ENCODE measurements at regions of chr7 and their contacts with region 1.

Region 1: DNA sequence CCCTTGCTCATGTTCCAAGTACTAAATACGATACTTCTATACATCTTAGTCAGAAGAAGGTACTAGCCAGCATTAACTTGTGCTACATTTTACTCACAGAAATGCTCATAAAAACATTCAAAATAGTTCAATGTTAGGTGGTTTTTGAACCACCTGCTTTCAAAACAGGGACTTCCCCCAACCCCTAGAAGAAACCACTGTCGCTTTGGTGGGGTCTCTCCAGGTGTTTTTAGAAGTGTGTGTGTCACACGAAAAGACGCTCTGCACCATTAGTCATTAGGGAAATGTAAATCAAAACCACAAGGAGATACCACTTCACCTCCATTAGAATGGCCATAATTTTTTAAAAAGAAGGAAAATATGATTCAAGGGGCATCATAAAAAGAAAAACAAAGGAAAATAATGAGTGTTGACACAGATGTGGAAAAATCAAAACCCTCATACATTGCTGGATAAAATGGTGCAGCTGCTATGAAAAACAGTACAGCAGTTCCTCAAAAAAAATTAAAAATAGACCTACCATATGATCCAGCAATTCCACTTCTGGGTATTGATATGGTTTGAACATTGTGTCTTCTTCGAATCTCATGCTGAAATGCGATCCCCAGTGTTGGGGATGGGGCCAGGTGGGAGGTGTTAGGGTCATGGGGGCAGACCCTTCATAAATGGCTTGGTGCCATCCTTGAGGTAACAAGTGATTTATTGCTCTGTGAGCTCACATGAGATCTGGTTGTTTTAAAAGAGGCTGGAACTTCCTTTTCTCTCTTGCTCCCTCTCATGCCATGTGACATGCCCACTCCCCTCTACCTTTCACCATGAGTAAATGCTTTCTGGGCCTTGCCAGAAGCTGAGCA is 74.2 kb downstream of the MALSU1 start:
- DNase-seq: peak; percentile 85
- ATAC-seq: peak; percentile 72
- H3K4me3 ChIP-seq: peak overlapping the region in 2 of 5 experiments; percentile 1 to 38
- H3K4me3 Mint-ChIP-seq: peak overlapping the region; percentile 74
- H3K27ac ChIP-seq: peak overlapping the region; percentile 65 to 77
- H3K27ac Mint-ChIP-seq: peak overlapping the region; percentile 89
- H3K4me1 ChIP-seq: peaks cover 39 to 40% of the 10 kb centered on the region in 2 donors
- H3K4me1 Mint-ChIP-seq: peaks cover 59% of the 10 kb centered on the region
- H3K27me3 ChIP-seq: no peaks in the 10 kb centered on the region
- H3K27me3 Mint-ChIP-seq: no peaks in the 10 kb centered on the region
- CTCF ChIP-seq: no peak

Region 2: GRCh38 chr7:22980422-22980821 is 393.0 kb before region 1 on chr7:
- CTCF ChIA-PET with region 1: no interaction called
- POLR2A ChIA-PET with region 1: no interaction called
- intact Hi-C with region 1: no loop called
- DNase-seq: no peak
- ATAC-seq: no peak
- H3K4me3 ChIP-seq: no peak overlapping the region
- H3K4me3 Mint-ChIP-seq: no peak overlapping the region
- H3K27ac ChIP-seq: no peak overlapping the region
- H3K27ac Mint-ChIP-seq: no peak overlapping the region
- H3K4me1 ChIP-seq: no peaks in the 10 kb centered on the region
- H3K4me1 Mint-ChIP-seq: no peaks in the 10 kb centered on the region
- H3K27me3 ChIP-seq: no peaks in the 10 kb centered on the region
- H3K27me3 Mint-ChIP-seq: no peaks in the 10 kb centered on the region
- CTCF ChIP-seq: no peak

Region 3: GRCh38 chr7:23410446-23411183 is 37.2 kb after region 1 on chr7:
- CTCF ChIA-PET with region 1: no interaction called
- POLR2A ChIA-PET with region 1: no interaction called
- intact Hi-C with region 1: loop called (anchors 1 kb)
- DNase-seq: peak; percentile 87
- ATAC-seq: peak; percentile 90
- H3K4me3 ChIP-seq: no peak overlapping the region
- H3K4me3 Mint-ChIP-seq: peak overlapping the region; percentile 47
- H3K27ac ChIP-seq: peak overlapping the region; percentile 37 to 82
- H3K27ac Mint-ChIP-seq: peak overlapping the region; percentile 53
- H3K4me1 ChIP-seq: peaks cover 17 to 18% of the 10 kb centered on the region in 2 donors
- H3K4me1 Mint-ChIP-seq: peaks cover 27% of the 10 kb centered on the region
- H3K27me3 ChIP-seq: no peaks in the 10 kb centered on the region
- H3K27me3 Mint-ChIP-seq: peaks cover 3% of the 10 kb centered on the region
- CTCF ChIP-seq: no peak

Region 4: DNA sequence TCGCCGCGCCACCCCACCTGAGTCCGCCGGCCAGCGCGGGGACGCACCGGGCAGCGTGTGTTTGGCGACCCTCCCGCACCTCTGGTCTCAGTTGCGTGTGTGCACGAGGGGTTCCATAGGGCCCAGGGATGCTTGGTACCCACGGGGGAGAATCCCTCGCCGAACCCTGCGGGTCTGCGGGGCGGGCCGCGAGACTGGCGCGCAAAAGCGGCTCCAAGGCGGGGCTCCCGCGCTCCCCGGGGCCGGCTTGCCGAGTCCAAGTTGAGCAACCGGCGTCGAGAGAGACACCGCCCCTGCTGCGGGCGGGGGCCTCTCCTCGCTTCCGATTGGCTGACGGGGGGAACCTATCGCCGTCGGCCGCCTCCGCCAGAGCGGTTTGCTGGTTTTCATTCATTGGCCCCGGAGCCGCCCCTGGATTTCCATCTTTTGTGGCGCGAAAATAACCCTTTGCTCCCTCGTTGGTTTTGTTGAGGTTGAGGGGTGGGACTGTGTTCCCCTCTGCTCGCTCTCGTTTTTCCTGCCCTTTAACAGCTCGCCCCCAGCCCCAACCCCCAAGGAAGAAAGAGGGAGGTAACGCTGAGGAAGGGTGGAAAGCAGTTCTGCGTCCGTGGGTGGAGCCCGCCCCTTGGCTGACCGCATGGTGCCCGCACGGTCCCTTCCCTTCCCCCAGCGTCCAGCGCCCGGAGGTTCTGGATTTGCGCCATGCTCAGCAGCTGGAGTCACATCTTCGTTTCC is 100.9 kb after region 1 on chr7:
- CTCF ChIA-PET with region 1: interaction called, 5 read pairs
- POLR2A ChIA-PET with region 1: interaction called, 4 read pairs
- intact Hi-C with region 1: loop called (anchors 2 kb)
- DNase-seq: peak; percentile 80
- ATAC-seq: peak; percentile 60
- H3K4me3 ChIP-seq: peak overlapping the region; percentile 1 to 81 (median 36)
- H3K4me3 Mint-ChIP-seq: peak overlapping the region; percentile 81
- H3K27ac ChIP-seq: no peak overlapping the region
- H3K27ac Mint-ChIP-seq: peak overlapping the region; percentile 71
- H3K4me1 ChIP-seq: peaks cover 41 to 51% of the 10 kb centered on the region in 2 donors
- H3K4me1 Mint-ChIP-seq: peaks cover 30% of the 10 kb centered on the region
- H3K27me3 ChIP-seq: peaks cover 0 to 83% (median 71%) of the 10 kb centered on the region in 4 experiments
- H3K27me3 Mint-ChIP-seq: peaks cover 61% of the 10 kb centered on the region
- CTCF ChIP-seq: no peak